ENCODE measurements at regions of chr5 and their contacts with region 1.

Region 1: GRCh38 chr5:139689631-139690063 is 41.5 kb downstream of the CXXC5 start:
- DNase-seq: peak; percentile 85 to 93 (median 90)
- ATAC-seq: peak; percentile 60
- H3K4me3 ChIP-seq: no peak overlapping the region
- H3K27ac ChIP-seq: peak overlapping the region; percentile 78 to 86 (median 82)
- H3K4me1 ChIP-seq: peaks cover 71% of the 10 kb centered on the region
- H3K27me3 ChIP-seq: no peaks in the 10 kb centered on the region
- CTCF ChIP-seq: peak in 2 of 7 experiments; percentile 5 to 9
- POLR2A ChIP-seq: peak in 2 of 3 donors; percentile 11 to 29

Region 2: GRCh38 chr5:139633295-139634027 is 56.2 kb before region 1 on chr5:
- intact Hi-C with region 1: loop called (anchors 10 kb)
- DNase-seq: peak; percentile 74 to 77 (median 76)
- ATAC-seq: no peak
- H3K4me3 ChIP-seq: no peak overlapping the region
- H3K27ac ChIP-seq: no peak overlapping the region
- H3K4me1 ChIP-seq: peaks cover 34% of the 10 kb centered on the region
- H3K27me3 ChIP-seq: no peaks in the 10 kb centered on the region
- CTCF ChIP-seq: peak; percentile 89 to 99 (median 96)
- POLR2A ChIP-seq: no peak